Activated CD4-positive, alpha-beta T cell treated with anti-CD3 and anti-CD28 coated beads for 36 hours (primary cell): ENCODE measurements at regions of chr12 and their contacts with region 1.

Region 1: DNA sequence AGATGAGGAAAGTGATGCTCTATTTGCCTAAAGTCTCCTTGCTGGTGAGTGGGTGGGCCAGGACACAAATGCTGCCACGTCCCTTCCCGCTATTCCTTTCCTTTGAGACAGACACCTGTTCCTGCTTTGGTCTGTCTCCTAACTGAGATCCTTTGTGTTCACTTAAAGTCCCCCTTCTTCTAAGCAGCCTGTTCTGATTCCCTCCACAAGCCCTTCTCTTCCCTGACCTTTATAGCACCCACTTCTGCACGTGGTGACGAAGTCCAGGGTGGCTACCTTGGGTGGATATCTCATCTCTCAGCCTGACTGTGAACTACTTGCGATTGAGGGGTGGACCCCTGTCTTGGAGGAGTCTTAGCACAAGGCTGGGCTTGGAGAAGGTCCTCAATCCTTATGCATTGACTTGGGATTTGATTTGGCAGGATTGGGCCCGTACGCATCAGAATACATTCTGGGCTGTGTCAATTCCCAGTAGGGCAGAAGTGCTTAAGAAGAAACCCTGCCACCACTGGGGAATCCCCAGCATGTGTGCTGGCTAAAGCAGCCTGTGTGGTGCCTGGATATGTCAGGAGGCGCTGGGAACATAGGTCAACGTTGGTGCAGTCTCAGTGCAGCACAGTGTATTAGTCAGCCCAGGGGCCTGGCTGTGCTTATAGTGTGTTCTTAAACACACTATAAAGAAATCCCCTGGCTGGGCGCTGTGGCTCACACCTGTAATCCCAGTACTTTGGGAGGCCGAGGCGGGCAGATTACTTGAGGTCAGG is 23.7 kb downstream of the KRT80 start:
- DNase-seq: peak; percentile 33
- ATAC-seq: peak; percentile 66
- H3K4me3 Mint-ChIP-seq: no peak overlapping the region
- H3K27ac Mint-ChIP-seq: no peak overlapping the region
- H3K4me1 Mint-ChIP-seq: no peaks in the 10 kb centered on the region
- H3K27me3 Mint-ChIP-seq: no peaks in the 10 kb centered on the region

Region 2: GRCh38 chr12:52213512-52214420 is 45.6 kb after region 1 on chr12:
- CTCF ChIA-PET with region 1: interaction called, 4 read pairs
- POLR2A ChIA-PET with region 1: no interaction called
- intact Hi-C with region 1: loop called in 1 of 2 experiments (anchors 1 kb)
- DNase-seq: peak; percentile 82
- ATAC-seq: peak; percentile 90
- H3K4me3 Mint-ChIP-seq: no peak overlapping the region
- H3K27ac Mint-ChIP-seq: no peak overlapping the region
- H3K4me1 Mint-ChIP-seq: no peaks in the 10 kb centered on the region
- H3K27me3 Mint-ChIP-seq: peaks cover 6% of the 10 kb centered on the region